ENCODE measurements at regions of chr7 and their contacts with region 1.

Region 1: DNA sequence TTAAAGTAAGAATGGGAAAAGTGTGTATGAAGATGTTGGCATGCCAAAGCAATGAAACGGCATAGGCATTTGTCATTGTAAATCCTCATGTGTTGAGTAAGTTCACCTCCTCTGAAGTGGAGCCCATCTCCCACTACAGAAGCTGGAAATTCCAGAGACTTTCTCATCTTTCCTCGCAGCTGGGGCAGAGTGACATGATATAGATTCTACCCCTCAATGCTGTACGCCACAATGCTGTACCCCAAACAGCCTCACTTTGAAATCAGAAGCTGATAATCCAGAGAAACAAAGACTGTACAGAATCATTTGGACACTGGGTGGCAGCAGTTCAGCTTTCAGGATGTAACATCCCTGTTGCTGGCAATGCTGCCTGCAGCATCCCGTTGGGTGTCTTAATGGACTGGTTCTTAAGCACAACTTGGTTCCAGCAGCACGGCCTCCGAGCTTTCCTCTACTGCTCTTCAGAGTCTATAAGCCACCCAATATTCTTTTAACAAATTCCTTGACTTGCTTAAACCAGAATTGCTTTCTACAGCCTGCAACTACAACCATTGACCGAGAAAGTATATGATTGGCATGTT is 18.8 kb downstream of the ZC3HAV1L start:
- DNase-seq: peak; percentile 5 to 81 (median 68)
- ATAC-seq: peak; percentile 94
- H3K4me3 ChIP-seq: no peak overlapping the region
- H3K4me3 Mint-ChIP-seq: no peak overlapping the region
- H3K27ac ChIP-seq: no peak overlapping the region
- H3K27ac Mint-ChIP-seq: no peak overlapping the region
- H3K4me1 ChIP-seq: peaks cover 4% of the 10 kb centered on the region
- H3K4me1 Mint-ChIP-seq: peaks cover 8% of the 10 kb centered on the region
- H3K27me3 ChIP-seq: no peaks in the 10 kb centered on the region
- H3K27me3 Mint-ChIP-seq: no peaks in the 10 kb centered on the region
- CTCF ChIP-seq: peak; percentile 65

Region 2: GRCh38 chr7:139035586-139036353 is 18.7 kb after region 1 on chr7 and contains the start of gene ZC3HAV1L:
- CTCF ChIA-PET with region 1: interaction called, 10 read pairs
- POLR2A ChIA-PET with region 1: interaction called, 3 read pairs
- intact Hi-C with region 1: no loop called
- DNase-seq: peak in 6 of 9 experiments; percentile 25 to 64 (median 40)
- ATAC-seq: peak; percentile 74
- H3K4me3 ChIP-seq: peak within 1 kb of the TSS; percentile 34 to 60
- H3K4me3 Mint-ChIP-seq: peak within 1 kb of the TSS; percentile 84
- H3K27ac ChIP-seq: no peak within 1 kb of the TSS
- H3K27ac Mint-ChIP-seq: no peak within 1 kb of the TSS
- H3K4me1 ChIP-seq: peaks cover 7% of the 10 kb centered on the region
- H3K4me1 Mint-ChIP-seq: peaks cover 23% of the 10 kb centered on the region
- H3K27me3 ChIP-seq: no peaks in the 10 kb centered on the region
- H3K27me3 Mint-ChIP-seq: no peaks in the 10 kb centered on the region
- CTCF ChIP-seq: no peak
- total RNA-seq, gene ZC3HAV1L: 0.16 to 0.44 TPM

Region 3: DNA sequence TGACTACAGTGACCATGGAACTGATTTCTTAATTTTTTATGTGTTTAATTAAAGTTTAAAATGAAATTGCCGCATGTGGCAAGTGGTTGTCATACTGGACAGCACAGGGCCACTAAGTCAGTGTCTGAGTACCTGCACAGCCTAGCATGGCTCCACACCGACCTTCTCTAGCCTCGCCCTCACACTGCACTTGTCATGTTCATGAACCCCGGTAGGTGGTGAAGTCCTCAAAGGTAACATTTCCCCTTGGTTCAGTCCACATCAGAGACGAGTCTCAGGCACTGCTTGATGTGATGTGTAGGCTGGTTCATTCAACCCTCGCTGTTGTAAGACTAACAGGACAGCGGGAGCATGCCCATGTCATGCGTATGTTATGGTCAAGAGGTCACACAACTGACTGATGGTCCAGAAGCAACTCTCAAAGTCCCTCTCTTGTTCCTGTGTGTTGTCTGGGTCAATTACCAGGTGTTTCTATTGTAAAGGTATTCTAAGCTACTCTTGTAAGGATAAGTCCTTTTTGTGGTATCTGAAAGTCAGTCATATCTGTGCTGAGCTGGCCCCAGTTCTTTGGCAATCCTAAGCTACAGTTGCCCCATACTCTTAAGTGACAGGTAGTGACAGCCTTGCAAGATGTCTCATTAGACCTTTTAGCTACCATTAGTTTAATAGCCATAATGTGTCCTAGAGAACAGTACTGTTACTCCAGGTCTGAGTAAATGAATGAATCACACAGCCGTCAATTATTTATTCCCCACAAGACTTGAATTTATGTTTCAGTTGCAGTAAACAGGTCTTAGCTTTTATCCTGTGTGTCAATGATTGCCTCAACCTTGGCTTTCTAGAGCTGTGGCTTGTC is 51.8 kb after region 1 on chr7:
- CTCF ChIA-PET with region 1: interaction called, 72 read pairs
- POLR2A ChIA-PET with region 1: interaction called, 3 read pairs
- intact Hi-C with region 1: no loop called
- DNase-seq: peak in 4 of 9 experiments; percentile 30 to 51 (median 41)
- ATAC-seq: peak; percentile 71
- H3K4me3 ChIP-seq: no peak overlapping the region
- H3K4me3 Mint-ChIP-seq: no peak overlapping the region
- H3K27ac ChIP-seq: no peak overlapping the region
- H3K27ac Mint-ChIP-seq: peak overlapping the region; percentile 29
- H3K4me1 ChIP-seq: peaks cover 42% of the 10 kb centered on the region
- H3K4me1 Mint-ChIP-seq: peaks cover 65% of the 10 kb centered on the region
- H3K27me3 ChIP-seq: no peaks in the 10 kb centered on the region
- H3K27me3 Mint-ChIP-seq: no peaks in the 10 kb centered on the region
- CTCF ChIP-seq: no peak

Region 4: DNA sequence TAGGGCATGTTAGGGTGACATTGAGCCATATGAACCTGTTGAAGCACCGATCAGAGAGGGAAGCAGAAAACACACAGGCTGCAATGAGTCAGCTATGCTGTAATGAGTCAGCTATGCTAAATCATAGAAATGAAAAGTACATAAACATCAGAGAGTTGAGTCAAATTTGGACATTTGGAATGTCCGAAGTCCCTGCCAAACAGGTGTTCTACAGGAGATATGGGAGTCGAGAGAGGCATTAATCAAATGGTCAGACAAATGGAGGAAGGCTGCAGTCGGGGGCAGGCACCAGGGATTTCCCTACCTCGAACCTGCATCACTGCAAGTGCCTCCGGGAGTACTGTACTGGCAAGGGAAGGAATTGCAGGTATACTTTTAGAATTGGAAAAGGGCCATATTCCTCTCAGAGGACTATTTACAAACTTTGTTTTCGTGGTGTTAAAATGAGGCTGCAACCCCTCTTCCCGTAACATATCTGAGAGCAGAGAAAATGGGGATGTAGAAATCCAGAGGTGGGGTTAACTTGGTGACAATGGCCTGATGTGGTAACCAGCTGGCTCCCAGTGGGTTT is 101.3 kb after region 1 on chr7:
- CTCF ChIA-PET with region 1: interaction called, 10 read pairs
- POLR2A ChIA-PET with region 1: no interaction called
- intact Hi-C with region 1: no loop called
- DNase-seq: peak in 1 of 9 experiments; percentile 21
- ATAC-seq: no peak
- H3K4me3 ChIP-seq: peak overlapping the region in 1 of 2 experiments; percentile 33
- H3K4me3 Mint-ChIP-seq: peak overlapping the region; percentile 43
- H3K27ac ChIP-seq: peak overlapping the region in 1 of 2 experiments; percentile 38
- H3K27ac Mint-ChIP-seq: peak overlapping the region; percentile 88
- H3K4me1 ChIP-seq: peaks cover 27% of the 10 kb centered on the region
- H3K4me1 Mint-ChIP-seq: peaks cover 36% of the 10 kb centered on the region
- H3K27me3 ChIP-seq: no peaks in the 10 kb centered on the region
- H3K27me3 Mint-ChIP-seq: no peaks in the 10 kb centered on the region
- CTCF ChIP-seq: no peak

Region 5: GRCh38 chr7:139133335-139134139 is 116.5 kb after region 1 on chr7:
- CTCF ChIA-PET with region 1: interaction called, 87 read pairs
- POLR2A ChIA-PET with region 1: no interaction called
- intact Hi-C with region 1: no loop called
- DNase-seq: peak; percentile 81 to 94 (median 89)
- ATAC-seq: peak; percentile 98
- H3K4me3 ChIP-seq: peak overlapping the region; percentile 60 to 63
- H3K4me3 Mint-ChIP-seq: peak overlapping the region; percentile 87
- H3K27ac ChIP-seq: peak overlapping the region; percentile 62 to 63
- H3K27ac Mint-ChIP-seq: peak overlapping the region; percentile 83
- H3K4me1 ChIP-seq: peaks cover 7% of the 10 kb centered on the region
- H3K4me1 Mint-ChIP-seq: peaks cover 13% of the 10 kb centered on the region
- H3K27me3 ChIP-seq: no peaks in the 10 kb centered on the region
- H3K27me3 Mint-ChIP-seq: no peaks in the 10 kb centered on the region
- CTCF ChIP-seq: no peak

Measured in CD8-positive, alpha-beta T cell (primary cell).